Activated CD4-positive, alpha-beta T cell treated with anti-CD3 and anti-CD28 coated beads, Interleukin-2, amount 10 ng/mL, durations not matched to agents 24 days and 14 days (primary cell): ENCODE measurements at regions of chr2 and their contacts with region 1.

Region 1: DNA sequence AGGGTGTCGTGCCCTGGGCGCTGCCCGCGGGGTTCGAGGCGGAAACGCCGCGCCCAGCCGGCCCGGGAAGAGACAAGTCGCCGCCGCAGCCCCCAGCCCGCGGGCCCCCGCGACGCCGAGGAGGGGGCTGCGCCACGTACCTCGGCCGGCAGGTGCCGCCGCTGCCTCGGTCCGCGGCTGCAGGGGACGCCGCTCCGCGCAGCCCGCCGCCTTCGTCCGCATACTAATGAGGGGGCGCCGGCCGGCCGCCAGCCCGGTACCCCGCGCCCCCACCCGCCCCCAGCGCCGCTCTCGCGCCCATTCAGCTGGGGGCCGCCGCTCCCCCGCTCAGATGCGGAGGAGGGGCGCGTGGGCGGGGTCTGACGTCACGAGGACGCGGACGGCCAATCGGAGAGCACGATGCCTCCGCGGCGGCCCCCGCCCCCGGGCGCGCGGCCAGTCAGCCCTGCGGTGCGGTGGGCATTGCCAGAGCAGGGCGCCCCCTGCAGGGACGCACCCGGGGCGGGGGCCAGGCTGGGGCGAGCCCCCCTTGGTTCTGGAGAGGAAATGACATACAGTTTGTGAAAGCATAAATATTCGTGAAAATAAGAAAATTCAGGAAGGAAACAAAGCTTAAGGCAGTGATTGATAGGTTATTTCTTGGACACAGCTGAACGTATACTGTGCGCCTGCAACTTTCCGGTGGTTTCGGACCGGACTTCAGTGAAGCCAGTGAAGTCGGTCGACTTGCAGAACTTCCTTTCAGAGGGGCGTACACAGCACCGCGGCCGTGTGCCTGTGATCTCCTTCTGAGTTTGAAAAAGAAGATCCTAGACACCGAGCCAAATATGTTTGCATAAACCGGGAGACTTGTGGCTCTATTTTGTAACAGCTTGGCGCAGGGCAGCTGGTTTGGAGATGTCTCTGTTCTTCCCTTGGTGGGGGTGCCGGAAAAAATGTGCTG is at the start of gene ST3GAL5:
- DNase-seq: peak; percentile 98
- H3K4me3 Mint-ChIP-seq: peak within 1 kb of the TSS; percentile 89
- H3K27ac Mint-ChIP-seq: peak within 1 kb of the TSS; percentile 90
- H3K4me1 Mint-ChIP-seq: peaks cover 63% of the 10 kb centered on the region
- H3K27me3 Mint-ChIP-seq: peaks cover 4% of the 10 kb centered on the region
- total RNA-seq, gene ST3GAL5: 13.3 and 14.6 TPM in 2 replicates

Region 2: DNA sequence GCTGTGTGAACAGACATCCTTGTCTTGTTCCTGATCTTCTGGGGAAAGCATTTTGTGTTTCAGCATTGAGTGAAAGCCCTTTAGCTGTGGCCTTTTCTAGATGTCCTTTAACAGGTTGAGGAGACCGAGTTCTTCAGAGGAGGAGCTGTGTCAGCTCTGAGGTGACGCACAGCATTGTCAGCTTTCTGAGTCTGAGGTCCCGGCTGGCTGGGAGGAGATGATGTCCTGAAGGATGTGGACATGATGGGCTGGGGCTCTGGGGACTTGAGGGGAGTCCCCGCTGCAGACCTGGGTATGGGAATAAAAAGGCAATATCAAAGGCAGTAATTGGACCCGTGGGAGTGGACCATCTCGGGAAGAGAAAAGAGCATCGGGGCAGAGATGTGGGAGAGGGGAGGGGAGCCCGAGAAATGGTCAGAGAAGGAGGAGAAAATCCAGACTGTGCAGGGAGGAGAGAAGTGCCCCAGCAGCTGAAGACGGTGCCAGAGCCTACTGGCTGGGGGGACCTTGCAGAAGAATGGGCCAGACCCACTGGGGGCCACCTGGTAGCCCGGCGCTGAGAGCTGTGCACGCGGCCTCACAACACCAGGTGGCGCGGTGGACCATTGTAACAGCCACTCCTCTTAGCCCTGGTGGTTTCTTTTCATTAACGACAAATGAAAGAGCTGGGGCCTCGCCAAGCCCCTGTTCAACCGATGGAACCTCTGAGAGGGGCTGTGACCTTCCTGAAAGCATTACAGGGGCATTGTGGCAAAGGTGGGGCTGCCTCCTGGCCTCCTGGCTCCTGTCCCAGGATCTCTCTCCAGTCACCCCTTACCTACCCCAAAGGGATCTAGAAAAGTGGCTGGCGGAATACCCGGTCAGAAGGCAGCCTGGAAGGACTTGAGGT is 61.7 kb before region 1 on chr2:
- intact Hi-C with region 1: loop called (anchors 1 kb)
- DNase-seq: peak; percentile 95
- H3K4me3 Mint-ChIP-seq: peak overlapping the region; percentile 5
- H3K27ac Mint-ChIP-seq: no peak overlapping the region
- H3K4me1 Mint-ChIP-seq: peaks cover 31% of the 10 kb centered on the region
- H3K27me3 Mint-ChIP-seq: peaks cover 23% of the 10 kb centered on the region

Region 3: GRCh38 chr2:85852937-85853498 is 35.9 kb before region 1 on chr2:
- intact Hi-C with region 1: loop called (anchors 1 kb)
- DNase-seq: peak; percentile 88
- H3K4me3 Mint-ChIP-seq: peak overlapping the region; percentile 76
- H3K27ac Mint-ChIP-seq: peak overlapping the region; percentile 97
- H3K4me1 Mint-ChIP-seq: peaks cover 61% of the 10 kb centered on the region
- H3K27me3 Mint-ChIP-seq: no peaks in the 10 kb centered on the region

Region 4: DNA sequence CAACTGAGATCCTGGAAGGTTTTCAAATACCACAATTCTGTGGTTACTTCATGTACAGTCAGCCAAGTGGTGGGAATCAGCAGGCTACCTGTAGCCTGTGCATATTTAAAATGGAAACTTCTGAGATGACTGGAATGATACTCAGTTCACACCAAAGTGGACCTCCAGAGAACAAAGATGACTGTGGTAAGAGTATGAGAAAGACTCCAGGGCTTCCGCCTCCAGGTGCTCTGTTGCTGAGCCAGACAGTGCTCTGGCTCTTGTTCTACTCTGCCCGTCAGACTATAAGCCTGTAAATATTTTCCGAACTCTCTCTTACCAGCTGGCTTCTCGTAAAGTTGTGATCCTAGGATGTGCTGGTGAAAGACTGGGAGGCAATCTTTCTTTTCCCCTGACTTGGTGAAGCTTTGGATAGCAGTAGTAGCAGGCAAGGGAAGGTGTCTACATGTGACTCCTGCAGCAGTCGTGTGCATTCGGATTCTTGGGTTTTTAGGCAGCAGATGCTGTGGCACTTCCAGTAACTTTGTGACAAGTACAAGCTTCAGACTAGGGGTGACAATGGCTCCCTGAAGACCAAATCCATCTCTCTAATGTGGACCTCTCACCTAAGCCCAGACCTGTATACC is 23.3 kb before region 1 on chr2:
- intact Hi-C with region 1: loop called (anchors 2 kb)
- DNase-seq: no peak
- H3K4me3 Mint-ChIP-seq: no peak overlapping the region
- H3K27ac Mint-ChIP-seq: peak overlapping the region; percentile 27
- H3K4me1 Mint-ChIP-seq: peaks cover 48% of the 10 kb centered on the region
- H3K27me3 Mint-ChIP-seq: no peaks in the 10 kb centered on the region

Region 5: DNA sequence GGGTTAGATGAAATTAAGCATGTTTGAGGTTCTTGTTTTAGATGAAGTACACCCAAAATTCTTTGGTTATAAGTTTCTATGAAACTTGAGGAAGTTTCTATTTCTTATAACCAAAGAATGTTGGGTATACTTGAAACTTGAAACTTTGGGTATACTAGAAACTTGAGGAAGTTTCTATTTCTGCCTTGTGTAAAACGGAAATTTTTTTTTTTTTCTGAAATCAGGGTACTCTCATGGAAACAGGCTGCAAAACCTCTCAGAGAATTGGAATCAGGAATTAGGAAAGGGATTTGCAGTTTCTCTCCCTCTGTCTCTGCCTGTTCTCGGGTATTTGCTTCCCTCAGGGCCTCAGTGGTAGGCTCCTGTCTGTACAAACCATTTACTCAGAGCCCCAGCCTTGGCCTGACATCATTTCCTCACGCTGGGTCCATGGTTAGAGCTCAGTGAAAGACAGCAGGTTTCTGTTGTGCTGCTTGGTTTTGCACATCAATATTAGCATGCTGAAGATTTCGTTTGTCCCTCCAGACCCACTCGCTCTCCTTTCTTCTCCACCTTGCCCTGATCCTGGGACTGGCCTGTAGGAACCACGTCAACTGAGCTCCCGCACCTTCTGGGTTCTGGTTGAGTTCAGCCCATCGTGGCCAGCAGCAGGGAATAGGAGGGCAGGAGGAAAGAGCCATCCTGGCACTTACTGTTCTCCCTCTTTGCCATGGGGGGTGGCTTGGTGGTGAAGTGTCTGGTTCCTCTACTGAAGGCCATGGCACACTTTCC is 110.3 kb after region 1 on chr2:
- intact Hi-C with region 1: loop called (anchors 1 kb)
- DNase-seq: peak; percentile 88
- H3K4me3 Mint-ChIP-seq: peak overlapping the region; percentile 56
- H3K27ac Mint-ChIP-seq: peak overlapping the region; percentile 83
- H3K4me1 Mint-ChIP-seq: peaks cover 63% of the 10 kb centered on the region
- H3K27me3 Mint-ChIP-seq: no peaks in the 10 kb centered on the region

Region 6: GRCh38 chr2:86079981-86080911 is 191.3 kb after region 1 on chr2:
- intact Hi-C with region 1: loop called (anchors 5 kb)
- DNase-seq: peak; percentile 95
- H3K4me3 Mint-ChIP-seq: no peak overlapping the region
- H3K27ac Mint-ChIP-seq: peak overlapping the region; percentile 70
- H3K4me1 Mint-ChIP-seq: peaks cover 41% of the 10 kb centered on the region
- H3K27me3 Mint-ChIP-seq: no peaks in the 10 kb centered on the region